Activated B cell treated with CpG ODN at 0.5 μM for 24 hours (primary cell): ENCODE measurements at regions of chr17 and their contacts with region 1.

Region 1: GRCh38 chr17:68512247-68512982 is at the start of gene PRKAR1A:
- DNase-seq: peak; percentile 92
- ATAC-seq: peak; percentile 77
- H3K4me3 Mint-ChIP-seq: peak within 1 kb of the TSS; percentile 100
- H3K27ac Mint-ChIP-seq: peak within 1 kb of the TSS; percentile 100
- H3K4me1 Mint-ChIP-seq: peaks cover 39% of the 10 kb centered on the region
- H3K27me3 Mint-ChIP-seq: no peaks in the 10 kb centered on the region
- CTCF ChIP-seq: no peak
- total RNA-seq, gene PRKAR1A: 272 and 279 TPM in 2 replicates

Region 2: DNA sequence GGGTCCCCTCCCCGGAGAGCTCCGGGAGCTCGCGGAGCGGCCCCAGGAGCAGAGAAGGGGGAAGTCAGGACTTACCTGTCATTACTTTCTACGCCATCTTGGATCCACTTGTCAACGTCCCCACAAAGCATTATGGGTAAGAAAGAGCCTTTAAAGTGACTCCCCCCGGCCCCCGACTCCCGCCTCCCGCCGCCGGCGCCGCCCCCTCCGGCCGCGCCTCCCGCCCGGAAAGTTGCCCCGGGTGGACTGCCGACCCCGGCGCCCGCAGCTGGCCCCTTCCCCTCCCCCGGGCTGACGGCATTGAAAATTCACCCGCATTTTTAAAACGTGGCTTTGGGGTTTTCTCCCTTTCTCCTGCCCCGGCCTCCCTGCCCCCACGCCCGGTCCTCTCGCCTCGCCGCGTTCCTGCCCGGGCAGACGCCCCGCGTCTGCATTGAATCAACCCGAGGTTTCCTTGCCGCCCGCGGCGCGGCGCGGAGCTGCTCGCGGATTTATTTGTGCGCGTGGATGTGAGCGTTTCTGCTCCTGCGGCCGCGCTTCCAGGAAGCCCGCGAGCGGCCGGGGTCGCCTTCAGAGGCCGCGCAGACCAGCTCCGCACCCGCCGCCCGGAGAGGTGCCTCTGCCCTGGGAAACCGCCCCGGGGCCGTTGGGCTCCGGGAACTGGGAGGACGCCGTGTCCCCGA is 1267.2 kb before region 1 on chr17 and contains the start of gene HELZ:
- CTCF ChIA-PET with region 1: no interaction called
- POLR2A ChIA-PET with region 1: no interaction called
- intact Hi-C with region 1: loop called (anchors 10 kb)
- DNase-seq: peak; percentile 72
- ATAC-seq: peak; percentile 85
- H3K4me3 Mint-ChIP-seq: peak within 1 kb of the TSS; percentile 91
- H3K27ac Mint-ChIP-seq: peak within 1 kb of the TSS; percentile 85
- H3K4me1 Mint-ChIP-seq: peaks cover 42% of the 10 kb centered on the region
- H3K27me3 Mint-ChIP-seq: peaks cover 4% of the 10 kb centered on the region
- CTCF ChIP-seq: no peak
- total RNA-seq, gene HELZ: 55.0 and 69.7 TPM in 2 replicates

Region 3: DNA sequence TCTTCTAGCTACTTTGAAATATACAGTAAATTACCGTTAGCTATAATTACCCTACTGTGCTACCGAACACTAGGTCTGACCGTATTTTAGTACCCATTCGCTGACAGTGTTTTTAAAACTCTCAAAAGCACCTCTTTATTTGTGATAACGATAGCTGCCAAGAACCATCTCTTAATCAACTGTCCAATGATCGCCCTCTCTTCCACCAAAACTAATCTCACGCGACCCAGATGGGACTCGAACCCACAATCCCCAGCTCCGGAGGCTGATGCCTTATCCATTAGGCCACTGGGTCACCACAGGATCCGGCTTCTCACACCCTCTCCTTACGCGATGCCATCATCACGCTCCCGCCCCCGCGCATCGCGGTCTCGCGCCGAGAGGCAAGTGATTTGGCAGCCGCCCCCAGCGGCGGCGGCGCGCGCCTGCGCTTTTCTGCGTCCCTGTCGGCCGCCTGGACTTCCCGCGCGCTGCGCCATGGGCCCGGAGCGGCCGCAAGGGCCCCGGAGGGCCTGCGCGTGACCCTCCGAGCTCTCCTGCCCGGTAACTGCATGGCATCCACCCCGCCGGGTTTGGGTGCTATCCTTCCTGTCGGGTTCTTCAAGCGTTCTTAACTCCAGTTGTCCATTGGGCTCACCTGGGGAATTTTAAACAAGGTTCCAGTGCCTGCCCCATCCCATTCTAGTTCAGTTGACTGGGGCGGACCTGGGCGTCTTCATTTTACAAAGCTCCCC is 492.6 kb before region 1 on chr17:
- CTCF ChIA-PET with region 1: no interaction called
- POLR2A ChIA-PET with region 1: no interaction called
- intact Hi-C with region 1: loop called (anchors 5 kb)
- DNase-seq: peak; percentile 99
- ATAC-seq: peak; percentile 90
- H3K4me3 Mint-ChIP-seq: peak overlapping the region; percentile 90
- H3K27ac Mint-ChIP-seq: peak overlapping the region; percentile 90
- H3K4me1 Mint-ChIP-seq: peaks cover 14% of the 10 kb centered on the region
- H3K27me3 Mint-ChIP-seq: peaks cover 2% of the 10 kb centered on the region
- CTCF ChIP-seq: no peak

Region 4: GRCh38 chr17:68221760-68222159 is 290.7 kb before region 1 on chr17:
- CTCF ChIA-PET with region 1: no interaction called
- POLR2A ChIA-PET with region 1: interaction called, 10 read pairs
- intact Hi-C with region 1: no loop called
- DNase-seq: no peak
- ATAC-seq: no peak
- H3K4me3 Mint-ChIP-seq: no peak overlapping the region
- H3K27ac Mint-ChIP-seq: peak overlapping the region; percentile 72
- H3K4me1 Mint-ChIP-seq: peaks cover 67% of the 10 kb centered on the region
- H3K27me3 Mint-ChIP-seq: no peaks in the 10 kb centered on the region
- CTCF ChIP-seq: no peak

Region 5: GRCh38 chr17:68491381-68492231 is 20.8 kb before region 1 on chr17:
- CTCF ChIA-PET with region 1: interaction called, 4 read pairs
- POLR2A ChIA-PET with region 1: interaction called, 102 read pairs
- intact Hi-C with region 1: loop called (anchors 2 kb)
- DNase-seq: no peak
- ATAC-seq: peak; percentile 75
- H3K4me3 Mint-ChIP-seq: peak overlapping the region; percentile 16
- H3K27ac Mint-ChIP-seq: peak overlapping the region; percentile 70
- H3K4me1 Mint-ChIP-seq: peaks cover 25% of the 10 kb centered on the region
- H3K27me3 Mint-ChIP-seq: no peaks in the 10 kb centered on the region
- CTCF ChIP-seq: no peak

Region 6: GRCh38 chr17:68576811-68577496 is 64.5 kb after region 1 on chr17:
- CTCF ChIA-PET with region 1: no interaction called
- POLR2A ChIA-PET with region 1: no interaction called
- intact Hi-C with region 1: no loop called
- DNase-seq: no peak
- ATAC-seq: no peak
- H3K4me3 Mint-ChIP-seq: no peak overlapping the region
- H3K27ac Mint-ChIP-seq: no peak overlapping the region
- H3K4me1 Mint-ChIP-seq: no peaks in the 10 kb centered on the region
- H3K27me3 Mint-ChIP-seq: peaks cover 8% of the 10 kb centered on the region
- CTCF ChIP-seq: no peak

Region 7: GRCh38 chr17:69117855-69118784 is 605.7 kb after region 1 on chr17:
- CTCF ChIA-PET with region 1: no interaction called
- POLR2A ChIA-PET with region 1: no interaction called
- intact Hi-C with region 1: loop called (anchors 1 kb)
- DNase-seq: no peak
- ATAC-seq: peak; percentile 41
- H3K4me3 Mint-ChIP-seq: peak overlapping the region; percentile 42
- H3K27ac Mint-ChIP-seq: peak overlapping the region; percentile 79
- H3K4me1 Mint-ChIP-seq: peaks cover 49% of the 10 kb centered on the region
- H3K27me3 Mint-ChIP-seq: no peaks in the 10 kb centered on the region
- CTCF ChIP-seq: no peak